IMR-90 (cell line): ENCODE measurements at regions of chr15 and their contacts with region 1.

Region 1: GRCh38 chr15:58469432-58470353 is 37.9 kb downstream of the LIPC start:
- DNase-seq: peak; percentile 97
- ATAC-seq: peak; percentile 90
- H3K4me3 ChIP-seq: no peak overlapping the region
- H3K27ac ChIP-seq: peak overlapping the region; percentile 97
- H3K4me1 ChIP-seq: peaks cover 24% of the 10 kb centered on the region
- H3K27me3 ChIP-seq: no peaks in the 10 kb centered on the region
- CTCF ChIP-seq: no peak
- POLR2A ChIP-seq: no peak
- RAD21 ChIP-seq: no peak

Region 2: DNA sequence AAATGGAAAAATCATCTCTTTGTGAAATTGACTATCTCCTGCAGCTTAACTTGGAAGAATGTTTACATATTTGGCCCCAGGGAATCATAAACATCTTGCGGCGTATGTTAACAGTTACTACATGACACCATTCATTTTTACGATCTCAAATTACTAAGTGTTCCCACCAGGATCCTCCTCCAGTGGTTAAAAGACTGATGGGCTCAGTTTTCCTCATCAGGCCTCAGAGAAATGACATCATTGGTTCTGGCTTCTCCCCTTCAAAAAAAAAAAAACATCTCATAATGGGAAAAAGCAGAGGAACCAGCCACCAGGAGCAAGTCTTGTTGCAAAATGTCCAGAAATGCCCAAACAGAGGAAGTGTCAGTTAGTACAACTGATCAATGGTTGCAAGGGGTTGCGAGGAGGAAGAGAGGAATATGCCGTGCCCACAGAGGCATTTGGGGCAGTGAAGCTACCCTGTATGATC is 108.4 kb before region 1 on chr15:
- CTCF ChIA-PET with region 1: no interaction called
- POLR2A ChIA-PET with region 1: no interaction called
- dilution Hi-C with region 1: no loop called
- in situ Hi-C with region 1: no loop called
- intact Hi-C with region 1: loop called (anchors 1 kb)
- DNase-seq: peak; percentile 99
- ATAC-seq: peak; percentile 89
- H3K4me3 ChIP-seq: no peak overlapping the region; the same call in 1 of the 2 replicates
- H3K27ac ChIP-seq: peak overlapping the region; percentile 99
- H3K4me1 ChIP-seq: peaks cover 29% of the 10 kb centered on the region
- H3K27me3 ChIP-seq: no peaks in the 10 kb centered on the region
- CTCF ChIP-seq: no peak
- POLR2A ChIP-seq: no peak
- RAD21 ChIP-seq: peak; percentile 26

Region 3: GRCh38 chr15:58484791-58485600 is 15.3 kb after region 1 on chr15:
- CTCF ChIA-PET with region 1: no interaction called
- POLR2A ChIA-PET with region 1: no interaction called
- dilution Hi-C with region 1: no loop called
- in situ Hi-C with region 1: no loop called
- intact Hi-C with region 1: no loop called
- DNase-seq: no peak
- ATAC-seq: no peak
- H3K4me3 ChIP-seq: no peak overlapping the region
- H3K27ac ChIP-seq: no peak overlapping the region
- H3K4me1 ChIP-seq: peaks cover 2% of the 10 kb centered on the region; the same call in 1 of the 2 replicates
- H3K27me3 ChIP-seq: no peaks in the 10 kb centered on the region
- CTCF ChIP-seq: no peak
- POLR2A ChIP-seq: no peak
- RAD21 ChIP-seq: no peak

Region 4: GRCh38 chr15:58546635-58547627 is 77.2 kb after region 1 on chr15:
- CTCF ChIA-PET with region 1: no interaction called
- POLR2A ChIA-PET with region 1: interaction called, 5 read pairs
- dilution Hi-C with region 1: no loop called
- in situ Hi-C with region 1: no loop called
- intact Hi-C with region 1: loop called (anchors 5 kb)
- DNase-seq: peak; percentile 91
- ATAC-seq: peak; percentile 38
- H3K4me3 ChIP-seq: no peak overlapping the region
- H3K27ac ChIP-seq: peak overlapping the region; percentile 48
- H3K4me1 ChIP-seq: peaks cover 34% of the 10 kb centered on the region
- H3K27me3 ChIP-seq: peaks cover 4% of the 10 kb centered on the region; the same call in 1 of the 2 replicates
- CTCF ChIP-seq: no peak
- POLR2A ChIP-seq: no peak
- RAD21 ChIP-seq: peak; percentile 34; the same call in 1 of the 2 replicates